Uterus (tissue), 4 donors: ENCODE measurements at regions of chr7 and their contacts with region 1.

Region 1: GRCh38 chr7:143008007-143008901 is 18.7 kb downstream of the OR9A2 start:
- DNase-seq: peak; percentile 67 to 72
- H3K4me3 ChIP-seq: no peak overlapping the region
- H3K27ac ChIP-seq: no peak overlapping the region
- H3K4me1 ChIP-seq: no peaks in the 10 kb centered on the region
- H3K27me3 ChIP-seq: no peaks in the 10 kb centered on the region
- CTCF ChIP-seq: peak; percentile 87 to 93 (median 90)
- POLR2A ChIP-seq: no peak

Region 2: DNA sequence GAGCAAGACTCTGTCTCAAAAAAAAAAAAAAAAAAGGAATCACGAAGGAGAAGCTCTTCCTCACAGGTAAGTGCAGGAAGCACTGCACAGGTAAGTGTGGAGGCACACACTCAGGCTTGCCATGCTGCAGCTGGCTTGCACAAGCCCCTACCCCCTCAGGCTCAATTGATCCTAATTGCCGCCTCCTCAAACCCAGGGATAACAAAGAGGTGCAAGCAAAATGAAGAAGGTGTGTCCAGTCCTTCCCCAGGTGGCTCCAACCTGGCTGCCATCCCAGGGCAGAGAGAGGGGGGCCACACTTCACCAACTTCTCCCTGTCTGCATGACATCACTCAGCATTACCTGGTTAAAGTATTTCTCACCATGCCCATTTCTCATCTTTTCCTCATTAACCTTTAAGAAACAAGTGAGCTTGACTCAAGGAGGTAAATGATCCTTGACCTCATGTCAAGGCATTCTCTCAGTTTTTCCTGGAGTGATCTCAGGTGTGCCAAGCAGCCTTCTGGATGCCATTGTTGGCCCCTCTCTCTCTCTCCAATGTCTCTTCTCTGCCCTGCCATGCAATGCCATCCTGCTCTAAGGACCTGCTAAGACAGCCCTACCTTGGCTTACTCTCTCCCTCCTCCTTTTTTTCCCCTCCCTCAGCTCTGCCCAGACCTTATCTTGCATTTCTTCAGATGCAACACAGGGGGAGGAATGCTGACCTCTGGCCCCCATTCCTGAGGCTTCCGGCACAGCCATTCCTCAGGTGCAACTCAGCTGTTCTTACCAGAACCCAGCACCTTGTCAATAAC is 109.7 kb before region 1 on chr7:
- intact Hi-C with region 1: no loop called
- DNase-seq: no peak
- H3K4me3 ChIP-seq: no peak overlapping the region
- H3K27ac ChIP-seq: no peak overlapping the region
- H3K4me1 ChIP-seq: no peaks in the 10 kb centered on the region
- H3K27me3 ChIP-seq: no peaks in the 10 kb centered on the region
- CTCF ChIP-seq: no peak
- POLR2A ChIP-seq: no peak

Region 3: DNA sequence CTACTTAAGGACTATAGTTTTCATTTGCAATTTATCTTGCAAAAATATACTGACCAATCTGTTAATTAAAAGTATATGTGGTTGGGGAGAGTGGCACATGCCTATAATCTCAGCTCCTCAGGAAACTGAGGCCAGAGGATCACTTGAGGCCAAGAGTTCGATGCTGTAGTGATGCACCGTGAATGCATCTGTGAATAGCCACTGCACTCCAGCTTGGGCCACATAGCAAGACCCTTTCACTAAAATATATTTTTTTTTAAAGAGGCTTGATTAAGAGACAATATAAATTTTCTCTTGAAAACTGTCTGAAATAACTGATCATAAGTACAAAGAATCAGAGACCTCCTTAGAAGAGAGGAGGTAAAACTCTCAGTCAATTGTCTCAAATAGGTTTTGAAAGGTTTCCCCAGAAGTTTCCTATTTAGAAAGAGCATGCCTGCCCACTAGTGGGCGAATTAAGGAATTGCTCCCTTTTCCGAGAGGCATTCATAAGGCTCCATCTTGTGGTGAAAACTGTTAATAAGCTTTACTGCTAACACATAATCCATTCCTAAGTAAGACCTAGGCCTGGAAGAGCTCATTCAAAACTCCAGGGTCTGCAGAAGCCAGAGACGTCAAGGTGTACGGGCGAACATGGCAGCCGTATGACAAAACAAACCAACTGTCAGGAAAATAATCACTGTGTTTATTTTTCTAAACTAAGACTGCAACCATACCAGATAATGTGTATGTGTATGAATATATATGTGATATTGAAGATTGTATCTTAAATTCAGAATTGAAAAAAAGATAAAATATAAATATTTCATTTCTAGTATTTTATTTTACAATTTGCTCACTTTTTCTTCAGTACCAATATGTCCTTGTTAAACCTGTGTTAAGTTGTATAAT is 206.8 kb after region 1 on chr7:
- intact Hi-C with region 1: loop called (anchors 10 kb)
- DNase-seq: peak; percentile 39 to 50
- H3K4me3 ChIP-seq: no peak overlapping the region
- H3K27ac ChIP-seq: no peak overlapping the region
- H3K4me1 ChIP-seq: no peaks in the 10 kb centered on the region
- H3K27me3 ChIP-seq: no peaks in the 10 kb centered on the region
- CTCF ChIP-seq: peak; percentile 96 to 100 (median 98)
- POLR2A ChIP-seq: no peak